ENCODE measurements at regions of chr5 and their contacts with region 1.

Region 1: GRCh38 chr5:35777358-35778087 is 79.2 kb upstream of the IL7R start:
- DNase-seq: peak; percentile 91
- H3K4me3 Mint-ChIP-seq: peak overlapping the region; percentile 4
- H3K27ac Mint-ChIP-seq: peak overlapping the region; percentile 49
- H3K4me1 Mint-ChIP-seq: peaks cover 56% of the 10 kb centered on the region
- H3K27me3 Mint-ChIP-seq: no peaks in the 10 kb centered on the region

Region 2: DNA sequence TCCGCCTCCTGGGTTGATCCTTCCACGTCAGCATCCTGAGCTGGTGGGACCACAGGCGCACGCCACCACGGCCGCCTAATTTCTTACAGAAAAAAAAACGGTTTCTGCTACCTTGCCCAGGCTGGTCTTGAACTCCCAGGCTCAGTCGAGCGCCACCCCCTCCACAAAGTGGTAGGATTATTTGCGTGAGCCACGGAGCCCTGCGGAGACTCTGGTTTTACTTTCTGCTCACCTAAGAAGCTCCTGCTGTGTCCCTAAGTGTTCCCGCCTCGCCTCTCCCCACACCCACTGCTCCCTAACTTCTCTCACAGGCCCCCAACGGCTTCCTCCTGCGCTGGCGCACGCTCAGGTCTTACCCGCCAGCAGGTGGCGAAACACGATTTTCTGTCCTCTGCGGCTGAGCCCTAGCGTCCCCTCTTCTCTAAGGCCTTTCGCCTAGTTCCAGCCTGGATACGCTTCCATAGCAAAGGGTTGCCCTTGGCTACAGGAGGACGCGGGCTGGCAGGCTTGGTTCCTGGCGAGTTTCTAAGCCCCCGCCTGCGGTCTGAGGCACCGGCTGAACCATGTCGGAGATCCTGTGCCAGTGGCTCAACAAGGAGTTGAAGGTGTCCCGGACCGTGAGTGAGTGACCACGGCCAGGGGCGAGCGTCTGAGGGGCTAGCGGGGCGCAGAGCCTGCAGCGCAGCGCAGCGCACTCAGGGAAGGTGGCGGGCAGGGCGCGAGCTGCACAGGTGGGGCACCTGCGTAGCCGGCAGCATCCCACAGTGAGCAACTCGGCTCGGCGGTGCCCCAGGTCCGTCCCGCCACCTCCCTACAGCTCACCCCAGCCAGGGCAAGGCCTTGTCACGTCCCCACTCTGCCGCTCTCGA is 159.9 kb before region 1 on chr5 and contains the start of gene SPEF2:
- intact Hi-C with region 1: loop called (anchors 5 kb)
- DNase-seq: peak; percentile 93
- H3K4me3 Mint-ChIP-seq: peak within 1 kb of the TSS; percentile 87
- H3K27ac Mint-ChIP-seq: peak within 1 kb of the TSS; percentile 89
- H3K4me1 Mint-ChIP-seq: peaks cover 23% of the 10 kb centered on the region
- H3K27me3 Mint-ChIP-seq: no peaks in the 10 kb centered on the region
- total RNA-seq, gene SPEF2: 5.5 and 5.8 TPM in 2 replicates

Region 3: DNA sequence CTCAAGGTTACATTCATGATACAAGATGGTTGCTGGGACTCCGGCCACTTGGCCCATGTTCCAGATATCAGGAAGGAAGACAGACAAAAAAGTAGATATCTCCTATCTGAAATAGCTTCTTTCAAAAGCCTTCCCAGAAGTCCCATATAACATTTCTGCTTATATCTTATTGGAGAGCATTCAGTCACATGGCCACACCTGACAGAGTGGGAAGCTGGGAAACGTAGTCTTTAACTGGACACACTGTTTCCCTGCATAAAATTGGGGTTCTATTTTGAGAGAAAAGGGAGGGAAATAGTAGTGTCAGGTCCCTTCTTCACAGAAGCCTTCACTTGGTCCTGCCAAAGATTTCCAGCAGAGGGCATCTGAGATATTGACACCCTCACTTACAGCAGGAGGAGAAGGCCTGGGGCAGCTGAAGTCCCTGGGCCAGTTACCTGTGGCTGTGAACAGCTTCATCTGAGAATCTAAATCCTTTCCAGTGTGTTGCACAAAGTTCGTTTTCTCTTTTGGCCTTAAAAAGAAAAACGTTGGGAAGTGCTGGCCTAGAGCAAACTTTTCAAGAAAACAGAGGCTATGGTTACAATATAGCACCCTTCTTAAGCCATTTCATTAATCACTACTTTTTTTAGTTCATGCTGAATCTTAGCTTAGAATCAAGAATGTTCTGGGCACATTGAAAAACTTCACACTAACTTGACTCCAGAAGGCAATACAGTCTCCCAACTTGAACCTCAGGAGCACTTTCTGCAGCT is 126.3 kb before region 1 on chr5:
- intact Hi-C with region 1: loop called (anchors 1 kb)
- DNase-seq: peak; percentile 90
- H3K4me3 Mint-ChIP-seq: no peak overlapping the region
- H3K27ac Mint-ChIP-seq: no peak overlapping the region
- H3K4me1 Mint-ChIP-seq: peaks cover 2% of the 10 kb centered on the region
- H3K27me3 Mint-ChIP-seq: no peaks in the 10 kb centered on the region